Activated CD4-positive, alpha-beta T cell treated with anti-CD3 and anti-CD28 coated beads for 36 hours (primary cell): ENCODE measurements at regions of chr13 and their contacts with region 1.

Region 1: DNA sequence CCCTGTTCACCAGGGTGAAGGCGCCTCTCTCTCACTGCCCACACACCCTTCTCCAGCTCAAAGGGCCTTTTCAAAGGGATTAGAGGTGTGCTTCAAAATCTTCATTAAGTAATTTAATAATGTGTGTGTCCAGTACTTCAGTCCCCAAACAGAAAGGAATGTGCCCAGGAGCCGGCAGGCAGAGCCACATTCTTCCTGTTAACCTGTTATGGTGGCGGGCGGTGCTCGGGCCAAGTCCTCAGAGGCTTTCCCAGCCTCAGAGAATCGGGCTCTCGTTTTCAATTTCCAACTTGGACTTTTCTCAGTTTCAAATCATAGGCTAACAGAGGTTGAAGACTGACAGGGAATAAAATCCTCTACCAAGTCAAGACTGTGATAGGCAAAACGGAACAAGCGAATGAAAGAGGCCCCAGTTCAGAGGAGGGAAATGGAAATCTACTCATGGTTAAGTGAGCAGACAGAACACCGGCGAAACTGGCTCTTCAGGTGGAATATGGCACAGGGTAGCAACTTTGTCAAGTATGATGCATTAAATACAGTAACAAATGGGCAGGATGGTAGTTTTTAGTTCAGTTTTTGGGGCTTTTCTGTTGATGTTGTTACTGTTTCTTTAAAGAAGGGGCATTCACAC is 68.6 kb downstream of the FOXO1 start:
- DNase-seq: no peak
- ATAC-seq: no peak
- H3K4me3 Mint-ChIP-seq: peak overlapping the region; percentile 57
- H3K27ac Mint-ChIP-seq: peak overlapping the region; percentile 89
- H3K4me1 Mint-ChIP-seq: peaks cover 92% of the 10 kb centered on the region
- H3K27me3 Mint-ChIP-seq: no peaks in the 10 kb centered on the region

Region 2: DNA sequence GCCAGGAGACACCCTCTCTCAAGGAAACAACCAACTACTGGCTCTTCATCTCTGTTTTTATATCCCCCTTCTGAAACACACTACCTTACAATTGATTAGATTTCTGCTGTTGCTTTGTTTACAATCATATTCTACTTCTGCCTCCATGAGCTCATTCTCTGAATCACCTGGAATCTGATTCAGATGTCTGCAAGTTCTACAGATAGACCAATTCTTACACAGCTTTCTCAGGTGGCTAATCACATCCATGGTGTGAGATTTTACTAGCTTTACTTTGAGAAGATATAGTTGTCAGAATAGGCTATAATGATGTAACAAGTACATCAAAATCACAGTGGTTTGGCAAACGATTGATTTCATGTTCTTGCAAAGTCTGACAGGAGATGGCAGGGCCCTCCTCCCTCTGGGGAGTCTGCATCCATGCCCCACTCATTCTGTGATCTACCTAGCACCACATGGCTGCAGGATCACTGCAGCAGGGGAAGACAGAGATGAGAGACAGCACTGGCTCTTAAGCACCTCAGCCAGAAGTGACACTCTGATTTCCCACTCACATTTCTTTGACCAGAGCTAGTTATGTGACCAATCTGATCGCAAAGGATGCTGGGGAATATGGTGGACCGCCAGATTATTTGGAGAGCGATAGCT is 175.1 kb before region 1 on chr13:
- CTCF ChIA-PET with region 1: no interaction called
- POLR2A ChIA-PET with region 1: no interaction called
- intact Hi-C with region 1: no loop called
- DNase-seq: peak; percentile 41
- ATAC-seq: peak; percentile 75
- H3K4me3 Mint-ChIP-seq: no peak overlapping the region
- H3K27ac Mint-ChIP-seq: no peak overlapping the region
- H3K4me1 Mint-ChIP-seq: peaks cover 32% of the 10 kb centered on the region
- H3K27me3 Mint-ChIP-seq: no peaks in the 10 kb centered on the region

Region 3: DNA sequence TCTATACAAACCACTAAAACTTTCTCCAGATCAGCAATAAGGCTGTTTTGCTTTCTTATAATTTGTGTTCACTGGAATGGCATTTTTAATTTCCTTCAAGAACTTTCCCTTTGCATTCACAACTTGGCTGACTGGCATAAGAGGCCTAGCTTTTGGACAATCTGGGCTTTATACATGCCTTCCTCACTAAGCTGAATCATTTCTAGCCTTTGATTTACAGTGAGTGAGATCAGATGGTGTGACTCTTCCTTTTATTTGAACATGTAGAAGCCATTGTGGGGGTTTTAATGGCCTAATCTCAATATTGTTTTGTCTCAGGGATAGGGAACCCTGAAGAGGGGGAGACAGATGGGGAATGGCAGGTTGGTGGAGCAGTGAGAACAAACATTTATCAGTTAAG is 14.1 kb before region 1 on chr13:
- CTCF ChIA-PET with region 1: interaction called, 4 read pairs
- POLR2A ChIA-PET with region 1: no interaction called
- intact Hi-C with region 1: loop called in 1 of 2 experiments (anchors 2 kb)
- DNase-seq: no peak
- ATAC-seq: peak; percentile 62
- H3K4me3 Mint-ChIP-seq: no peak overlapping the region
- H3K27ac Mint-ChIP-seq: peak overlapping the region; percentile 70
- H3K4me1 Mint-ChIP-seq: peaks cover 91% of the 10 kb centered on the region
- H3K27me3 Mint-ChIP-seq: no peaks in the 10 kb centered on the region

Region 4: GRCh38 chr13:40676007-40676406 is 78.2 kb after region 1 on chr13:
- CTCF ChIA-PET with region 1: no interaction called
- POLR2A ChIA-PET with region 1: no interaction called
- intact Hi-C with region 1: no loop called
- DNase-seq: no peak
- ATAC-seq: no peak
- H3K4me3 Mint-ChIP-seq: no peak overlapping the region
- H3K27ac Mint-ChIP-seq: no peak overlapping the region
- H3K4me1 Mint-ChIP-seq: peaks cover 24% of the 10 kb centered on the region
- H3K27me3 Mint-ChIP-seq: no peaks in the 10 kb centered on the region